ENCODE measurements at regions of chr1 and their contacts with region 1.

Region 1: GRCh38 chr1:11037740-11038182 is 9.3 kb downstream of the MASP2 start:
- DNase-seq: peak; percentile 93
- ATAC-seq: peak; percentile 97
- H3K4me3 Mint-ChIP-seq: no peak overlapping the region
- H3K27ac Mint-ChIP-seq: no peak overlapping the region
- H3K4me1 Mint-ChIP-seq: peaks cover 9% of the 10 kb centered on the region
- H3K27me3 Mint-ChIP-seq: no peaks in the 10 kb centered on the region

Region 2: GRCh38 chr1:10950316-10951172 is 87.2 kb before region 1 on chr1:
- CTCF ChIA-PET with region 1: no interaction called
- POLR2A ChIA-PET with region 1: no interaction called
- DNase-seq: no peak
- ATAC-seq: no peak
- H3K4me3 Mint-ChIP-seq: no peak overlapping the region
- H3K27ac Mint-ChIP-seq: no peak overlapping the region
- H3K4me1 Mint-ChIP-seq: no peaks in the 10 kb centered on the region
- H3K27me3 Mint-ChIP-seq: peaks cover 22% of the 10 kb centered on the region

Region 3: DNA sequence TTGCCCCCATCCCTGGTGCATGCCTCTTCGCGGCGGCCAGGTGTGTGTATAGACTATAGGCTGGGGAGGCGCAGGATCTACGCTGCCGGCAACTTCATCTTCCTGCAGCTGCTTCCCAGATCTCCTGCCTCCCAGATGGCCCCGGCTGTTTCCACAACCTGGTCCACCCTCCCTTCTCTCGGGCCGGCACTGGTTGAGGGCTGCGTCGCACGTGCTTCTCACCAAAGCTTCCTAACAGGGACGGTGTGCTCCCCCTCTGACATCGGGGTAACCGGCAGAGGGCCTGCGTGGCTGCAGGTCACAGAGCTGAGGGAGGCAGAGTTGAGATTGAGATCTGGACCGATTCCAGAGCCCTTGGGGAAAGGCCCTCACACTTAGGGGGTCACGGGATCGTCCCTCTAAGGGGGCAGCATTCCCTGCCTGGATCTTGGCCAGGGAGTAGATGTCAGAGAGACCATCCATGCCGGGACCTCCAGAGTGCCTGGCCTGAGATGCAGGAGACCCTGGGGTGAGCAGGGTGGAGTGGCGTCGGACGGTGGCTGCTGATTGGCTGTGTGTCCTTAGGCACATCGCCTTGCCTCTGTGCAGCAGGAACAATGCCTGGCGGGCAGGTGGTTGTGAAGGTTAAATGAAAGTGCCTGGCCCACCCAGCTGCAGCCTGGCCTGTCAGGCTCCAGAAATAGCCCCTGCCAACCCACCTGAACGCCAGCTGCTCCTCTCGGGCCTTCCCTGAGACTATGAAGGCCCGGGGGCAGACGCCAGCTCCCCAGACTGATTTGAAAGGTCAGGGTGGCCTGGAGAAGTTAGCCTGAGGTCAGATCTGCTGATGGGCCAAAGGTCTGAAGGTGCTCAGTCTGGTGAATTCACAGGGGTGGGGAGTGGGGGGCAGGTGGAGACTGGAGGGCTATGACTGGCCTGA is 15.3 kb after region 1 on chr1:
- CTCF ChIA-PET with region 1: interaction called, 42 read pairs
- POLR2A ChIA-PET with region 1: interaction called, 3 read pairs
- DNase-seq: no peak
- ATAC-seq: no peak
- H3K4me3 Mint-ChIP-seq: no peak overlapping the region
- H3K27ac Mint-ChIP-seq: no peak overlapping the region
- H3K4me1 Mint-ChIP-seq: peaks cover 3% of the 10 kb centered on the region
- H3K27me3 Mint-ChIP-seq: no peaks in the 10 kb centered on the region

Region 4: DNA sequence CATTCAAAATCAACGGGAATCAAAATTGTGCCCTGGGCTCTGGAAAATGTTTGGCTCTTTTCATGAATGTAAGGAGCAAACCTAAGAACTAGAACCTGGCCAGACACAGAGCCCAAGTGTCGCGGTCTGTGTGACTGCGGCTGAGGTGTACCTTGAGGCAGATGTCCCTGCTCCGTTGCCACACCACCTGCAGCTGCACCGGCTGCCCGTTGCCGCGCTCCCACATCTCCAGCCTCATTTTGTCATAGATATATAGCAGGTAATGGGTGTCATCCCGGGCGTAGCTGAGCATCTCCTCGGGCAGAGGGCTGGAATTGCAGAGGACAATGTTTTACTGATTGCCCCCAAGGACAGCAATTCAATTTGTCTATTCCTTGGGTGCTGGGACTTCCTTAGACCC is 43.2 kb after region 1 on chr1:
- CTCF ChIA-PET with region 1: interaction called, 22 read pairs
- POLR2A ChIA-PET with region 1: interaction called, 3 read pairs
- DNase-seq: no peak
- ATAC-seq: no peak
- H3K4me3 Mint-ChIP-seq: no peak overlapping the region
- H3K27ac Mint-ChIP-seq: no peak overlapping the region
- H3K4me1 Mint-ChIP-seq: no peaks in the 10 kb centered on the region
- H3K27me3 Mint-ChIP-seq: no peaks in the 10 kb centered on the region

Region 5: GRCh38 chr1:11126569-11126968 is 88.8 kb after region 1 on chr1:
- CTCF ChIA-PET with region 1: interaction called, 11 read pairs
- POLR2A ChIA-PET with region 1: no interaction called
- DNase-seq: no peak
- ATAC-seq: no peak
- H3K4me3 Mint-ChIP-seq: no peak overlapping the region
- H3K27ac Mint-ChIP-seq: no peak overlapping the region
- H3K4me1 Mint-ChIP-seq: no peaks in the 10 kb centered on the region
- H3K27me3 Mint-ChIP-seq: no peaks in the 10 kb centered on the region

Region 6: DNA sequence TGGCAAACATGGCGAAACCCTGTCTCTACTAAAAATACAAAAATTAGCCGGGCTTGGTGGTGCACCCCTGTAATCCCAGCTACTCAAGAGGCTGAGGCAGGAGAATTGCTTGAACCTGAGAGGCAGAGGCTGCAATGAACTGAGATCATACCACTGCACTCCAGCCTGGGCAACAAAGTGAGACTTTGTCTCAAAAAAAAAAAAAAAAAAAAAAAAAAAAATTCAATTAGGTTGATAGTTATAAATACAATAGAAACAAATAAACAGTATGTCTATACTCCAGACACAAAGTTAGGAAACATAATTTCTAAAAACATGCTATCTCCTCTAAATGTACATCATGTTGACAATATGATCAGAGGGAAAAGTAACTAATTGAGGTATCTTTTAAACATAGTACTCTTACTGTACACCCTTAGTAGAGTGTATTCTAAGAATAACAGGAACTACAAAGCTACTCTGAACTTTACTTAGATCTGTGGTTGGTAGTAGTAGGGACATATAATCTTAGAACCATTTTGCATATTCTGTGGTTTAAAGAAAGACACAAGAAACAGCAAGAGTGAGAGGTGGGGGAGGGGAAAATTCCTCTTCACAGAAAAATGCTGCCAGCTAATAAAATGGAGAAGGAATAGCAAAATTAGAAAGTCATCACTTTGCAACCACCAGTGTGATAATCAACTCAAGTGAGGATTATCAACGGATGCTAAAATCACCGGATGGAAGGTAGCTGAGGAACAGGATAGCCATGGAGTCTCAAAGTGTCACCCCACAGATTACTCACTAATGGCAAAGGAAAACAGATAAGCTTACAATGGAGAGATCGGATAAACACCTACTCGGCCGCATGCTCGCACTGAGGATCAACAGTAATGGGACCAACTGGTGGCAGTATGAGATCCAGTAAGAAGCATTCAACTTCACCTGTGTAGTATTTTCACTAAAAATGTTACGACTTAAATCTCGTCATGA is 189.6 kb after region 1 on chr1:
- CTCF ChIA-PET with region 1: interaction called, 22 read pairs
- POLR2A ChIA-PET with region 1: no interaction called
- DNase-seq: no peak
- ATAC-seq: peak; percentile 64
- H3K4me3 Mint-ChIP-seq: peak overlapping the region; percentile 27
- H3K27ac Mint-ChIP-seq: peak overlapping the region; percentile 72
- H3K4me1 Mint-ChIP-seq: peaks cover 23% of the 10 kb centered on the region
- H3K27me3 Mint-ChIP-seq: no peaks in the 10 kb centered on the region

Region 7: DNA sequence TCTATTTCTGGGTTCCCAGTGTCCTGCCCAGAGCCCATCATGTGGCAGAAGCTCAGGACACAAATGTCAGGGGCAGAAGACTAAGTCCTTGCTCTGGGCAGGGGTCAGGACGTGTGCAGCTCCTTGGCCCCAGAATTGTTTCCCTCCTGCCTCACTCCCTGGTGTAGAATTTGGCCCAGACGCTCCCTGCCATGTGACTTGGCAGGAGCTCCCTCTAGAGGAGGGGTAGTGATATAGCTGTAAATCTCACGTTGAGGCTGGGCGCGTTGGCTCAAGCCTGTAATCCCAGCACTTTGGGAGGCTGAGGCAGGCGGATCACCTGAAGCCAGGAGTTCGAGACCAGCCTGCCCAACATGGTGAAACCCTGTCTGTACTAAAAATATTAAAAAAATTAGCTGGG is 326.4 kb after region 1 on chr1:
- CTCF ChIA-PET with region 1: interaction called, 14 read pairs
- POLR2A ChIA-PET with region 1: no interaction called
- DNase-seq: peak; percentile 33
- ATAC-seq: no peak
- H3K4me3 Mint-ChIP-seq: no peak overlapping the region
- H3K27ac Mint-ChIP-seq: no peak overlapping the region
- H3K4me1 Mint-ChIP-seq: no peaks in the 10 kb centered on the region
- H3K27me3 Mint-ChIP-seq: no peaks in the 10 kb centered on the region